ENCODE measurements at regions of chr7 and their contacts with region 1.

Region 1: GRCh38 chr7:36487756-36488336 is 98.2 kb downstream of the ANLN start:
- DNase-seq: peak; percentile 75 to 88 (median 85)
- H3K4me3 ChIP-seq: no peak overlapping the region
- H3K27ac ChIP-seq: no peak overlapping the region
- H3K4me1 ChIP-seq: peaks cover 0 to 8% (median 1%) of the 10 kb centered on the region in 4 experiments
- H3K27me3 ChIP-seq: no peaks in the 10 kb centered on the region

Region 2: GRCh38 chr7:36473454-36474282 is 14.2 kb before region 1 on chr7:
- CTCF ChIA-PET with region 1: interaction called, 68 read pairs
- POLR2A ChIA-PET with region 1: no interaction called
- DNase-seq: peak in 2 of 3 donors; percentile 31 to 68
- H3K4me3 ChIP-seq: no peak overlapping the region
- H3K27ac ChIP-seq: no peak overlapping the region
- H3K4me1 ChIP-seq: peaks cover 14 to 46% (median 25%) of the 10 kb centered on the region in 4 experiments
- H3K27me3 ChIP-seq: no peaks in the 10 kb centered on the region

Region 3: GRCh38 chr7:37181550-37181932 is 693.7 kb after region 1 on chr7:
- CTCF ChIA-PET with region 1: interaction called, 29 read pairs
- POLR2A ChIA-PET with region 1: interaction called, 3 read pairs
- DNase-seq: no peak
- H3K4me3 ChIP-seq: no peak overlapping the region
- H3K27ac ChIP-seq: no peak overlapping the region
- H3K4me1 ChIP-seq: peaks cover 0 to 12% (median 4%) of the 10 kb centered on the region in 4 experiments
- H3K27me3 ChIP-seq: no peaks in the 10 kb centered on the region